Activated T-helper 2 cell treated with anti-CD3 and anti-CD28 coated beads, Interferon-gamma antibody, Interleukin-2, Interleukin-4, amounts not matched to agents 10 μg/mL and 5 μg/mL and 100 μg/mL, durations not matched to agents 14 hours and 24 hours and 36 hours (primary cell): ENCODE measurements at regions of chr1 and their contacts with region 1.

Region 1: GRCh38 chr1:193456811-193457280 is 270.4 kb upstream of the B3GALT2 start:
- DNase-seq: no peak
- H3K4me3 Mint-ChIP-seq: no peak overlapping the region
- H3K27ac Mint-ChIP-seq: no peak overlapping the region
- H3K4me1 Mint-ChIP-seq: peaks cover 25% of the 10 kb centered on the region
- H3K27me3 Mint-ChIP-seq: no peaks in the 10 kb centered on the region

Region 2: DNA sequence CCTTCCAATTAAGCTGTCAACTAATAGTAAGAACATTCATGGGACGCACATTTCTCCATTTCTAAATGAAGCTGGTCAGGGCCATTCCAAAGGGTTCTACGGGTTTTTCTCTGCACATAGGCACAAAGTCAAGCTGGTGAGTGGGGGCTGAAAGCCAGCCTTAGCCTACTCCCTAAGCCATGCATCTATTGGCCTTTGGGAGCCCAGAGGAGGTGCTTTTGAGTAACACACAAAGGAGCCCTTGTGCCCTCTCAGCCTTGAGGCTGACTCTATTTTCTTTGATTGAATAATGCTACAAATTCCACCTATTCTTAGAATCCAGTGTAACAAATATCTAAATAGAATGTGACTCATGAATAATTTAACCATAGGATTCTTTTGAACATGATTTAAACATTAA is 747.3 kb before region 1 on chr1:
- intact Hi-C with region 1: no loop called
- DNase-seq: no peak
- H3K4me3 Mint-ChIP-seq: no peak overlapping the region
- H3K27ac Mint-ChIP-seq: no peak overlapping the region
- H3K4me1 Mint-ChIP-seq: no peaks in the 10 kb centered on the region
- H3K27me3 Mint-ChIP-seq: peaks cover 2% of the 10 kb centered on the region

Region 3: DNA sequence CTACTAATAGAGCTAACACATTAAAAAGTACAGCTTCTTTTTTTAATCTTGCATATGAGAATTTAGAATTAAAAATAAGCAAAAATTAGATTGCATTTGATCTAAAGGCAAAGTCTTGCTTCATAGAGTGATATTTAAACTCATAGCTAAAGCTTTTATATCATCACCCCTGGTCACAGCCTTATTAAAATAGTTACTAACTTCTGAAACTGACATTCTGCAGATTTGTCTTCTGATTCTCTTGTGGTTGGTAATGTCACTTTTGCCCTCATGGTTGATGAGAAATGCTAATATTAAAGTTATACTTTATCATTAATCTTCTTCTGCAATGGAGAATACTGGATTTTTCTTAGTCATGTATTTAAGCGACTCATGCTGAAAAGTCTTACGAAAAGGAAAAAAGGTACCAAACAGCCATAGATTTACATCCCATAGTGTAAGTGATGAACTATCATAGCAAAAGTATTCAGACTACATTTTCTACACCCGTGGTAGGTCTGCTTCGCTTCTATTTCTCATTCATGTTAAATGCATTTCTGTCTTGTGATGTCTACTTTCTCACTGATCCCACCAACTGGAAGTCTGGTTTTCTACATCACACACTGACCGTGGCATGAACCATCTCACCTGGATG is 60.0 kb after region 1 on chr1:
- intact Hi-C with region 1: loop called (anchors 2 kb)
- DNase-seq: no peak
- H3K4me3 Mint-ChIP-seq: no peak overlapping the region
- H3K27ac Mint-ChIP-seq: peak overlapping the region; percentile 56
- H3K4me1 Mint-ChIP-seq: peaks cover 12% of the 10 kb centered on the region
- H3K27me3 Mint-ChIP-seq: no peaks in the 10 kb centered on the region